ENCODE measurements at regions of chr11 and their contacts with region 1.

Region 1: DNA sequence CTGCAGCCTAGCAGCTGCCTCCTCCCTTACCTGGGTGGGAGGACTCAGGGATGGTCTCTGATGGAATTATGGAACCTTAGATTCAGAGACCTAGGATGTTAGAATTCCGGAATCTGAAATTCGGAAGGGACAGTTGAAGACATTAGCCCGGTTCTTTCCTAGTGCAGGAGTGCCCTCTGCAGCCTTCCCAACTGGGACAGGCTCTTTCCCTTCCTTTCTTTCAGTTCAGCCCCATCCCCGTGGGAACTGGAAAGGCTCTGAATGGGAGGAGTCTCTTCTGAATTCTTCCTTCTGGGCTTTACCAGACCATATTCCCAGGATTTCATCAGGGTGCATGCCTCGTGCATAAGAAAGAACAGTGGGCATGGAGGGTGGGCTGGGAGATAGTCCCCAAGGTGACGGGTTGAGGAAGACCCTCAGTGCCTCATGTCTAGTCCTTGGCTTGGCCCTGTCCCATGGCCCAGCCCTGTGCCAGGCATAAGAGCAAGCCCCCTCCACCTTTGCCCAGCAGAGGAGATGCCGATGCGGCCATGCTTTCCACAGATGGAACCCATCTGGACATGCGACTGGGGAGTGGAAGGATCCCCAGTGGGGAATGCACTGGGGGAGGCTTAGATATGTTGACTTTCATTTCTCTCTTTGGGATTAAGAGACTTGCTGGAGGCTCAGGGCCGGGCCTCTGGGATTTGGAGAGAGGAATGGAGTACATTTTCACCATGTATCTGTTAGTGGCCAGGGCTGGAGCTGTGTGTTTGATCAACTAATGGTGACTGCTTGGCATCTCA is 14.4 kb downstream of the DNAJB13 start:
- DNase-seq: no peak
- H3K4me3 Mint-ChIP-seq: no peak overlapping the region
- H3K27ac Mint-ChIP-seq: no peak overlapping the region
- H3K4me1 Mint-ChIP-seq: peaks cover 44% of the 10 kb centered on the region
- H3K27me3 Mint-ChIP-seq: no peaks in the 10 kb centered on the region

Region 2: GRCh38 chr11:73982969-73983740 is 17.9 kb after region 1 on chr11:
- CTCF ChIA-PET with region 1: interaction called, 18 read pairs
- intact Hi-C with region 1: loop called (anchors 1 kb)
- DNase-seq: peak; percentile 96
- H3K4me3 Mint-ChIP-seq: peak overlapping the region; percentile 98
- H3K27ac Mint-ChIP-seq: peak overlapping the region; percentile 99
- H3K4me1 Mint-ChIP-seq: peaks cover 45% of the 10 kb centered on the region
- H3K27me3 Mint-ChIP-seq: no peaks in the 10 kb centered on the region

Region 3: DNA sequence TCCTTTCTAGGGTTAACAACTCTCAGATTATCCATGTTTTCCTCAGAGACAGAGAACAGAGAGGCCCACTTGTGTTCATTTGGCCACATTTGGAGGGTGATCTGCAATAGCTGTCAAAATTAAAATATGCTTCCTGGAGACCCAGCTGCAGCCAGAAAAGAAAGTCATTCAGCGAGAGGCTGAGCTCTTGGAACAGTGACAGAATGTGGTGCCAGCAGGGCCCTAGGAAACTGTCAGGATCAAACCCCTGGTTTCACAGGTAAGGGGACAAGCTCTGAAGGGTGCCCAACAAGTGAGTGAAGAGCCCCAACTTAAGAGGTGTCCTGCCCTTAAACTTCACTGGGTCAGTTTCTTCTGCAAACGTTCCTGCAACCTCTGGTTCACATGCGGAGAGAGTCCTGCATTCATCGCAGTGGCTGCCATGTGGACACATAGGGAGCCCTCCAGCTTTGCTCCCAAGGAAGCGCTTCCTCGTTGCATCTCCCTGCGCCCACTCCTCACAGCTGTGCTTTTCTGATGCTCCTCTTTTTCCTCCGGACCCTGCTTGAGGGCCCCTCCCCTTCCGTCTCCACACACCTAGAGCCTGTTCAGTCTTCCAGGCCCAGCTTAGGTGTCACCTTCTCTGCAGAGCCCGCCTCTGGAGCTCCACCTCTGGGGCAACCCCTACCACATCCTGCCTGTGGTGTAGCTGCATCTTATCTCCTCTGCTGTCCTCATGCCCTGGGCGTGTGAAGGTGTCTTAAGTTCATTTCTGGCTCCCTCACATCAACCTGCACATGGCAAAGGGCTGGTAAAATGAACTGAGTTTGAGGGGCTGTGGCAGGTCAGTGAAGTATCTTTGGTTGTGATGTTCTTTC is 39.7 kb after region 1 on chr11:
- CTCF ChIA-PET with region 1: no interaction called
- intact Hi-C with region 1: loop called (anchors 1 kb)
- DNase-seq: peak; percentile 95
- H3K4me3 Mint-ChIP-seq: peak overlapping the region; percentile 56
- H3K27ac Mint-ChIP-seq: peak overlapping the region; percentile 88
- H3K4me1 Mint-ChIP-seq: peaks cover 51% of the 10 kb centered on the region
- H3K27me3 Mint-ChIP-seq: no peaks in the 10 kb centered on the region

Region 4: DNA sequence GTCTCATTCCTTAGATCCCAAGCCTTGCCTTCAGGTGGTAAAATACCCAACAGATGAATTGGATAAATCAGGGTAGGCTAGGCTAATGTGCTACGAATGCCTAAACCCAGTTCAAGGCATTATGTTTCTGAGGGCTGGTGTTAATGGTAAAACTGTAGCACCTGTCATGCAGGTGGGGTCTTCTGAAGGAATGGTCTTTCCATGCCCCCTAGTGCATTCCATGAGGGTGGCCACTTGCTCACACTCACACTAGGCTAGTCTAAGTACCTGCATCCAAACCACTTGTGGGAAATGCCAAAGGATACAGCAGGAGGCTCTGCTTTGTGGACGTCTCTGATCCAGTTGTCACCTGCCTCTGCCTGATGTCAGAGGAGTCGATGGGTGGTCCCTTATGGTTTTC is 67.8 kb after region 1 on chr11:
- CTCF ChIA-PET with region 1: interaction called, 8 read pairs
- intact Hi-C with region 1: loop called (anchors 1 kb)
- DNase-seq: no peak
- H3K4me3 Mint-ChIP-seq: no peak overlapping the region
- H3K27ac Mint-ChIP-seq: no peak overlapping the region
- H3K4me1 Mint-ChIP-seq: peaks cover 14% of the 10 kb centered on the region
- H3K27me3 Mint-ChIP-seq: no peaks in the 10 kb centered on the region

Region 5: GRCh38 chr11:74090701-74091100 is 125.4 kb after region 1 on chr11:
- CTCF ChIA-PET with region 1: interaction called, 4 read pairs
- intact Hi-C with region 1: loop called (anchors 1 kb)
- DNase-seq: peak; percentile 11
- H3K4me3 Mint-ChIP-seq: no peak overlapping the region
- H3K27ac Mint-ChIP-seq: no peak overlapping the region
- H3K4me1 Mint-ChIP-seq: no peaks in the 10 kb centered on the region
- H3K27me3 Mint-ChIP-seq: no peaks in the 10 kb centered on the region

Region 6: GRCh38 chr11:74255741-74256369 is 290.6 kb after region 1 on chr11:
- CTCF ChIA-PET with region 1: interaction called, 8 read pairs
- intact Hi-C with region 1: loop called (anchors 5 kb)
- DNase-seq: peak; percentile 68
- H3K4me3 Mint-ChIP-seq: no peak overlapping the region
- H3K27ac Mint-ChIP-seq: no peak overlapping the region
- H3K4me1 Mint-ChIP-seq: peaks cover 3% of the 10 kb centered on the region
- H3K27me3 Mint-ChIP-seq: no peaks in the 10 kb centered on the region

Region 7: DNA sequence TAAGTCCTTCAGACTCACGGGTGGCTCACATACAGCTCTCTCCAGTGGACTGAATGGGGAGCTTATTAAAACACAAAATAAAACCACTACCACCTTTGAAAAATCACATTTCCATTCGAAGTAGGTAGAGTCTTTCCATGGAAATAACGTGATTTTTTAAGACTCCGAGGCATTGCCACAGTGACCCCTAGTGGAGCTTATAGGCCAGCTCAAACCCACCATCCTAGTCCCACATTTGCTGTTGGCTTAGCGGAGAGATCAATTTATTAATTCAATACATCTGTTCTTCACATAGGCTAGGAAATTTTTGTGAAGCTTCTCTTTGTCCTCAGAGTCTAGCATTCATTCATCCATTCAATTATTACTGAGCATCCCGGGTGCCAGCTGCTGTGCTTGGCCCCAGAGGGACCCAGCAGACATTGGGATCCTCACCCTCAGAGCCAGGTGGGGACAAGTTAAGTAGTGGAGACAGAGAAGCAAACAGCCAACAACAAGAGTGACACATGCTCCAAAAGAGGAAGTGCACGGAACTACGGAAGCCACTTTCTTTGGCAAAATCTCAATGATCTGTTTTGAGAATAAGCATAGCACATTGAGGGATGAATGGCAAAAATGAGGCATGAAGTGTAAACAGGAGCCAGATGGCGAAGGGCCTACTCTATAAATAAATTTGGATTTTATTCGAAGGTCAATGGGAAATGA is 356.4 kb after region 1 on chr11:
- CTCF ChIA-PET with region 1: interaction called, 8 read pairs
- intact Hi-C with region 1: loop called (anchors 1 kb)
- DNase-seq: peak; percentile 56
- H3K4me3 Mint-ChIP-seq: no peak overlapping the region
- H3K27ac Mint-ChIP-seq: no peak overlapping the region
- H3K4me1 Mint-ChIP-seq: no peaks in the 10 kb centered on the region
- H3K27me3 Mint-ChIP-seq: peaks cover 4% of the 10 kb centered on the region